ENCODE measurements at regions of chr1 and their contacts with region 1.

Region 1: DNA sequence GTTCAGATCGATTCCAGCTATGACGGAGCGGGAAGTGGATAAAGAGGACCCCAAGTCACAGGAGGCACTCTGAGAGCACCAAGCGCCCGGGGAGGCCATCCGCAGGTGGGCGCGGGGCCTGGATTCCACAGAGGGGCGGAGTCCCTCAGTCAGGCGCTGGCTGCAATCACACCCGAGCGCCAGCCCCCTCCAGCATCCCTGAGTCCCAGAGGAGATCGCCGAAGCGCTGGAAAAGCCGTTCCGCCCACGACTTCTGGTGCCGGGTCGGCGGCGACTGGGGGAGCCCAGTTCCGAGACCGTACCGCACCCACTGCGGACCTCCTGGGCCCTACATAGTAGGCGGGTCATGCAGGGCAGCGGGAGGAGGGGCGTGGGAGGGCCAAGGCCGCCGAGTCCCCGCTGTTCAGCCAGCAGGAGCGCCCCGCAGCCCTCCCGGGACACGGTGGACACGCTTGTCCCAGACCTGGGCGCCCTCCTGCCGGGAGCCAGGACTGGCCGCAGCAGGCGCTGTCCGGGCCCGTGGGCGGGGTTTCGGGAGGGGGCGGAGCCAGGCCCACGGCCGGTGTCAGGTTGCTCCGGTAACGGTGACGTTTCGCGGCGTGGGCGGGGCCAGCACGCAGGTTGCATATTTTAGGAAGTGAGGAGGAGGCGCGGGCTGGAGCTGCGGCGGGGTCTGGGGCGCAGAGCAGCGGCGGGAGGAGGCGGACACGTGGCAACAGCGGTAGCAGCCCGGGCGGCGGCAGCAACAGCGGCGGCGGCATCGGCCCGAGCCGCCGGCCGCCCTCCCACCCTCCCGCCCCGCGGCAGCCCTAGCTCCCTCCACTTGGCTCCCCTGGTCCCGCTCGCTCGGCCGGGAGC is at the start of gene ATP1A1:
- DNase-seq: peak; percentile 95 to 100 (median 98)
- ATAC-seq: peak; percentile 66
- H3K4me3 ChIP-seq: peak within 1 kb of the TSS; percentile 77
- H3K4me3 Mint-ChIP-seq: peak within 1 kb of the TSS; percentile 98
- H3K27ac ChIP-seq: peak within 1 kb of the TSS; percentile 88 to 98
- H3K27ac Mint-ChIP-seq: peak within 1 kb of the TSS; percentile 93
- H3K4me1 ChIP-seq: peaks cover 37% of the 10 kb centered on the region
- H3K4me1 Mint-ChIP-seq: peaks cover 58% of the 10 kb centered on the region
- H3K27me3 ChIP-seq: no peaks in the 10 kb centered on the region
- H3K27me3 Mint-ChIP-seq: no peaks in the 10 kb centered on the region
- CTCF ChIP-seq: no peak
- total RNA-seq, gene ATP1A1: 251 to 262 TPM

Region 2: GRCh38 chr1:115939455-115939854 is 433.4 kb before region 1 on chr1:
- CTCF ChIA-PET with region 1: no interaction called
- POLR2A ChIA-PET with region 1: no interaction called
- intact Hi-C with region 1: no loop called
- DNase-seq: no peak
- ATAC-seq: no peak
- H3K4me3 ChIP-seq: no peak overlapping the region
- H3K4me3 Mint-ChIP-seq: no peak overlapping the region
- H3K27ac ChIP-seq: no peak overlapping the region
- H3K27ac Mint-ChIP-seq: no peak overlapping the region
- H3K4me1 ChIP-seq: no peaks in the 10 kb centered on the region
- H3K4me1 Mint-ChIP-seq: no peaks in the 10 kb centered on the region
- H3K27me3 ChIP-seq: no peaks in the 10 kb centered on the region
- H3K27me3 Mint-ChIP-seq: peaks cover 8% of the 10 kb centered on the region
- CTCF ChIP-seq: no peak

Region 3: DNA sequence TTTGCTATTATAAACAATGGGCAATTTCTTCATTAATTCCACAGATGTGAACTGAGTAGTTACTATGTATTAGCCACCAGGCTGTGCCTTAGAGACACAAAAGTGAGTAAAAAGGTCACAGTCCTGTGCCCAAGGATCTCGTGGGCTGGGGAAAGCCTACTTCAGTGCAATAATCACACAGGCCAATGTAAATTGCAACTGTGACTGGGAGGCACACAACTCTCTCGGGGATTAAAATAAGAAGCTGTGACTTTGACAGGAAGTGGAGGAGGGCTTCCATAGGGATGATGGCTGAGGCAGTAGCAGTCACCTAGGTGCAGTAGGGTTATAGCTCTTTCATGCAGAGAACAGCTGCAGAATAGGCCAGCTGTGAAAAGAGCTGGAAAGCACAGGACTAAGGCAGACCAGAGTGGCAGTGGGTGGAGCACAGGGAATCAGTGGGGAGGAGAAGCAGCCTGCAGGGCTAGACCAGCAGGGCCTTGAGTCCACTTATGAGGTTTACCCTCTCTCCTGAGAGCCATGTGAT is 139.8 kb before region 1 on chr1:
- CTCF ChIA-PET with region 1: no interaction called
- POLR2A ChIA-PET with region 1: interaction called, 4 read pairs
- intact Hi-C with region 1: loop called (anchors 1 to 5 kb)
- DNase-seq: peak in 12 of 14 experiments; percentile 10 to 71 (median 21)
- ATAC-seq: peak; percentile 99
- H3K4me3 ChIP-seq: no peak overlapping the region
- H3K4me3 Mint-ChIP-seq: no peak overlapping the region
- H3K27ac ChIP-seq: no peak overlapping the region
- H3K27ac Mint-ChIP-seq: peak overlapping the region; percentile 2
- H3K4me1 ChIP-seq: peaks cover 15% of the 10 kb centered on the region
- H3K4me1 Mint-ChIP-seq: peaks cover 26% of the 10 kb centered on the region
- H3K27me3 ChIP-seq: no peaks in the 10 kb centered on the region
- H3K27me3 Mint-ChIP-seq: no peaks in the 10 kb centered on the region
- CTCF ChIP-seq: peak; percentile 64

Region 4: DNA sequence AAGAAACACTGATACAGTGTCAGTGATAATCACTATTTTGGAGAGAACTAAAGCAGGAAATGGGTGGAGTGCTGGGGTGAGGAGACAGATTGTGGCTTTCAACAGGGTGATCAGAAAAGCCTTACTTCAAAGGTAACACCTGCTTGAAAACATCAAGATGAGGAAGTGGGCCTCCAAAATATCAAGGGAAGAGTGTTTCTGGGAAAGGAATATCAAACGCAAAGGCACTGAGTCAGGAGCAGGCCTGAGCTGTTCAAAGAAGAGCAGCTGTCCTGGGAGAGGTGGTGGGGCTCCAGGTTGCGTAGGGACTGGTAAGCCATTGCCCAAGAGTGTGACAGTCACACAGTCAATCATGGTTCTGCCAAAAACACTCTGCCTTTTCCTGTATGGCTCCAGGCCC is 46.9 kb before region 1 on chr1:
- CTCF ChIA-PET with region 1: no interaction called
- POLR2A ChIA-PET with region 1: interaction called, 35 read pairs
- intact Hi-C with region 1: loop called (anchors 2 to 5 kb)
- DNase-seq: peak; percentile 25 to 83 (median 53)
- ATAC-seq: peak; percentile 91
- H3K4me3 ChIP-seq: peak overlapping the region; percentile 22
- H3K4me3 Mint-ChIP-seq: peak overlapping the region; percentile 62
- H3K27ac ChIP-seq: peak overlapping the region; percentile 72 to 85
- H3K27ac Mint-ChIP-seq: peak overlapping the region; percentile 91
- H3K4me1 ChIP-seq: peaks cover 60% of the 10 kb centered on the region
- H3K4me1 Mint-ChIP-seq: peaks cover 98% of the 10 kb centered on the region
- H3K27me3 ChIP-seq: no peaks in the 10 kb centered on the region
- H3K27me3 Mint-ChIP-seq: no peaks in the 10 kb centered on the region
- CTCF ChIP-seq: no peak

Region 5: GRCh38 chr1:116345843-116346242 is 27.0 kb before region 1 on chr1:
- CTCF ChIA-PET with region 1: no interaction called
- POLR2A ChIA-PET with region 1: interaction called, 35 read pairs
- intact Hi-C with region 1: loop called in 1 of 2 experiments (anchors 2 kb)
- DNase-seq: peak; percentile 34 to 91 (median 59)
- ATAC-seq: peak; percentile 91
- H3K4me3 ChIP-seq: no peak overlapping the region
- H3K4me3 Mint-ChIP-seq: peak overlapping the region; percentile 18
- H3K27ac ChIP-seq: peak overlapping the region; percentile 33 to 49
- H3K27ac Mint-ChIP-seq: peak overlapping the region; percentile 87
- H3K4me1 ChIP-seq: peaks cover 56% of the 10 kb centered on the region
- H3K4me1 Mint-ChIP-seq: peaks cover 82% of the 10 kb centered on the region
- H3K27me3 ChIP-seq: no peaks in the 10 kb centered on the region
- H3K27me3 Mint-ChIP-seq: no peaks in the 10 kb centered on the region
- CTCF ChIP-seq: no peak

Region 6: GRCh38 chr1:116390195-116390594 is 17.4 kb after region 1 on chr1:
- CTCF ChIA-PET with region 1: interaction called, 5 read pairs
- POLR2A ChIA-PET with region 1: interaction called, 18 read pairs
- intact Hi-C with region 1: loop called (anchors 1 to 2 kb)
- DNase-seq: peak in 7 of 14 experiments; percentile 8 to 85 (median 39)
- ATAC-seq: peak; percentile 88
- H3K4me3 ChIP-seq: no peak overlapping the region
- H3K4me3 Mint-ChIP-seq: no peak overlapping the region
- H3K27ac ChIP-seq: peak overlapping the region; percentile 13 to 22
- H3K27ac Mint-ChIP-seq: peak overlapping the region; percentile 69
- H3K4me1 ChIP-seq: peaks cover 26% of the 10 kb centered on the region
- H3K4me1 Mint-ChIP-seq: peaks cover 68% of the 10 kb centered on the region
- H3K27me3 ChIP-seq: no peaks in the 10 kb centered on the region
- H3K27me3 Mint-ChIP-seq: no peaks in the 10 kb centered on the region
- CTCF ChIP-seq: no peak

Region 7: DNA sequence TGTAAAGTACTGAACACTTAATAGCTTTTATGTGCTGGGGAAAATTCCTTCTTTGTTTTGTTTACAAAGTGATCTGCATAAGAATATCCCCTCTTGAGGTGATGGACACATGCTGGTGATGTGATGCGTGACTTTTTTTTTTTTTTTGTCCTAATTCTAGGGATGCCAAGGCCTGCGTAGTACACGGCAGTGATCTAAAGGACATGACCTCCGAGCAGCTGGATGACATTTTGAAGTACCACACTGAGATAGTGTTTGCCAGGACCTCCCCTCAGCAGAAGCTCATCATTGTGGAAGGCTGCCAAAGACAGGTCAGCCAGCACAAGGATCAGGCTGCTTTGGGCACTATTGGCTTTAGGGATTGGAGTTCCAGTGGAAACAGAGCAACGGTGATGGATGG is 24.9 kb after region 1 on chr1:
- CTCF ChIA-PET with region 1: no interaction called
- POLR2A ChIA-PET with region 1: interaction called, 17 read pairs
- intact Hi-C with region 1: no loop called
- DNase-seq: no peak
- ATAC-seq: no peak
- H3K4me3 ChIP-seq: no peak overlapping the region
- H3K4me3 Mint-ChIP-seq: no peak overlapping the region
- H3K27ac ChIP-seq: no peak overlapping the region
- H3K27ac Mint-ChIP-seq: peak overlapping the region; percentile 56
- H3K4me1 ChIP-seq: peaks cover 8% of the 10 kb centered on the region
- H3K4me1 Mint-ChIP-seq: peaks cover 32% of the 10 kb centered on the region
- H3K27me3 ChIP-seq: no peaks in the 10 kb centered on the region
- H3K27me3 Mint-ChIP-seq: no peaks in the 10 kb centered on the region
- CTCF ChIP-seq: no peak

Region 8: DNA sequence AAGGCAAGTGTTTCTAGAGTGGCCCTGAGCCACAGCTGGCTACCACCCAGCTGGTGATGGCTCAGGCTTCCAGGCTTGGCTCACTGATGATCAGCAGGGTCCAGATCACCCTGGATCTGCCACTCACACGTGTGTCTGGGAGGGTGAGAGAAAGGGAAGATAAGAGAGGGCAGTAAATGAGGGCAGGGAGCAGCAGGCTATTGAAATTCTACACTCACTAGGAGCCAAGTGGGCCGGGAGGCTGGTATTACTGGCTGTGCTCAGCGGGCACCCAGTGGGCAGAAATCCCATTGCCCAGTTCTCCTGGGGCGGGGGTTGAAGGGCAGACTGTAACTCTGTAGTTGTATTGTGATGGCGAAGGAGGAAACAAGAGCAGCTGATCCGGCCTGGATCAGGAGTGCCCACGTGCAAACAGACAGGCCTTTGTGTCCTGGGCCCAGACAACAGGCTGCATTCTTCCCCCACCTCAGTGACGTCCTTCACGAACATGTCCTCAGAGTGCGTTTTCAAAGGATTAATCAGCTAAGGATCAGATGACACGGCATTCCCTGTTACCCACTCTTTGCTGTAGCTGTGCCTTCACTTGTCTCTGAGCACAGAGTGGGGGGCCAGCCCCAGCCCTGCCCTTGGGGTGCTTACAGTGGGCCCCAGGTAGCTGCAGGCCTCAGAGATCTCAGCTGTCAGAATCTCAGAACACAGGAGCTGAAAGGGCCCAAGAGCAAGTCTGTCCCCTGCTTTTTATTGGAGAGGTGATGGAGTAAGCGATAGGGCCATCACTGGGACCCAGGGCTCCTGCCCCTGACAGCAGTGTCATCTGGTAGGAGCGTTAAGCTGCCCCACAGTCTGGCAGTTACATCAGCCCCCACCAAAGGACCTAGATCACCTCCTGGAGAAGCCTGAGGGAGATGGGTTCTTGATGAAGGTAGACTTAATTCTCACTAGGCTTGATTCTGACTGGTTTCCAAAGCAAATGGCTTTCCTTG is 60.8 kb after region 1 on chr1:
- CTCF ChIA-PET with region 1: no interaction called
- POLR2A ChIA-PET with region 1: interaction called, 12 read pairs
- intact Hi-C with region 1: loop called in 1 of 2 experiments (anchors 5 kb)
- DNase-seq: no peak
- ATAC-seq: no peak
- H3K4me3 ChIP-seq: no peak overlapping the region
- H3K4me3 Mint-ChIP-seq: no peak overlapping the region
- H3K27ac ChIP-seq: no peak overlapping the region
- H3K27ac Mint-ChIP-seq: no peak overlapping the region
- H3K4me1 ChIP-seq: no peaks in the 10 kb centered on the region
- H3K4me1 Mint-ChIP-seq: no peaks in the 10 kb centered on the region
- H3K27me3 ChIP-seq: no peaks in the 10 kb centered on the region
- H3K27me3 Mint-ChIP-seq: no peaks in the 10 kb centered on the region
- CTCF ChIP-seq: no peak

Region 9: DNA sequence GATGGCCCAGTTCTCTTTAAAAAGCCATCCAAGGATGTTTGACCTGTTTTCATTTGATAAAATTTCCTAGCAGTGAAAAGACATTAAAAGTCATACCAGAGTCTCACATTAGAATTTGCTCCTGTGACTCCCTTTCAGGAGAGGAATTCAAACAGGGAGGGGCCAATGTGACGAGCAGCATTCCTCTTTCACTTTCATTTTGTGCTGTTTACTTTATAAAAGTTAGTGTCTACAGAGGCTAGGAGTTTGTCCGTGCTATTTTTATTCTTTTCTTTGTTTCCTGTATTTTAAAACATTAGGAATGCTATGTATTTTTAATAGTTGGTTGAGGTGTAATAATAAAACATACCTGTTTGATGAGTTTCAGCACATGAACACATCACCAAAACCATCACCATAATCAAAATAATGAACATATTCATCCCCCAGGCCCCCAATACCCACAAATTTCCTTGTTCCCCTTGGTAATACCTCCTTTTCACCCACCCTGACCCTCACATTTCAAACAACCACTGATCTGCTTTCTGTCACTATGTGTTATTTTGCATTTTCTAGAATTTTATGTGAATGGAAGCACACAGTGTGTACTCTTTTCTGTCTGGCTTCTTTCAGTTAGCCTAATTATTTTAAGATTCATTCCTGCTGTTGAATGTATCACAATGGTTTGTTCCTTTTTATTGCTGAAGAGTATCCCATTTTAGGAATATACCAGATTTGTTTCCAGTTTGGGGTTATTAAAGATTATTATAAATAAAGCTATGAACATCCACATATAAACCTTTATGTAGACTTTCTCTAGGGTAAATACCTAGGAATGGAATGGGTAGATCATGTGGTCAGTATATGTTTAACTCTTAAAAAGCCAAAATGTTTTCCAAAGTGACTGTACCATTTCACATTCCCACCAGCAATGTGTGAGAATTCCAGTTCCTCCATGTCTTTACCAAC is 1362.5 kb after region 1 on chr1:
- CTCF ChIA-PET with region 1: no interaction called
- POLR2A ChIA-PET with region 1: no interaction called
- intact Hi-C with region 1: no loop called
- DNase-seq: peak in 6 of 14 experiments; percentile 12 to 80 (median 54)
- ATAC-seq: peak; percentile 80
- H3K4me3 ChIP-seq: peak overlapping the region; percentile 50
- H3K4me3 Mint-ChIP-seq: peak overlapping the region; percentile 74
- H3K27ac ChIP-seq: peak overlapping the region; percentile 2 to 57
- H3K27ac Mint-ChIP-seq: peak overlapping the region; percentile 82
- H3K4me1 ChIP-seq: peaks cover 8% of the 10 kb centered on the region
- H3K4me1 Mint-ChIP-seq: peaks cover 24% of the 10 kb centered on the region
- H3K27me3 ChIP-seq: no peaks in the 10 kb centered on the region
- H3K27me3 Mint-ChIP-seq: no peaks in the 10 kb centered on the region
- CTCF ChIP-seq: no peak

Measured in CD4-positive, alpha-beta T cell (primary cell).